Esophagus squamous epithelium (tissue), 5 donors: ENCODE measurements at regions of chr15 and their contacts with region 1.

Region 1: DNA sequence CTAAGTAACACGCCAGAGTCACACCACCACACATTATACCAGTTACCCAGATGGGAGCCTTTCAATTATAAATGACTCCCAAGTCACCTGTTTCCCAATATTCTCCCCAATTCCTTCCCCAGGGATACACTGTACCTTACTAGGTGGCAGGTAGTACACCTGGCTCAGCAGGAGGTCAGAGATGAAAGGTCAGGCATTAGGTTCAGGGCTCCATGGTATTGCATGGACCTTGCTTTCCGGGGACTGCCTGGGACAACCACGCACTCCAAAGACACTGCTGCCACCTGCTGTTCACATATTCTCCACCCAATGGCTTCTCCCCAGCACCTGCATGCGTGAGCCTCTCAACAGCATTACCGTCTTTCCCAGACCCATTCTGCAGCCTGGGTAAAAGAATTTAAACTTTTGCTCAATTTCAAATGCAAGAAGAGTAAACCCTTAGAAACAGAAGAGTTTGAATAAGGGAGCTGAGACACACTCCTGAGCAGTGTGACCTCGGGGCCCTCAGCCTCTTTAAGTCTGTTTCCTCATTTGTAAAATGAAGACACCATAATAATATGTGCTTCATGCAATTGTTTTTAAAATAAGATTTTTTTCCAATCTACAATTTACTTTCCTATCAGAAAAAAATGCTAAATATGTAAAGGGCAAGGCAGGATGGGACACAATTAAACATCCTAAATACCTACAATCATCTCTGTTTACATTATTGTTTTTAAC is 28.0 kb upstream of the LACTB start:
- DNase-seq: no peak
- H3K4me3 ChIP-seq: no peak overlapping the region
- H3K27ac ChIP-seq: no peak overlapping the region
- H3K4me1 ChIP-seq: no peaks in the 10 kb centered on the region
- H3K27me3 ChIP-seq: no peaks in the 10 kb centered on the region
- CTCF ChIP-seq: peak; percentile 69 to 87 (median 81)
- POLR2A ChIP-seq: no peak

Region 2: DNA sequence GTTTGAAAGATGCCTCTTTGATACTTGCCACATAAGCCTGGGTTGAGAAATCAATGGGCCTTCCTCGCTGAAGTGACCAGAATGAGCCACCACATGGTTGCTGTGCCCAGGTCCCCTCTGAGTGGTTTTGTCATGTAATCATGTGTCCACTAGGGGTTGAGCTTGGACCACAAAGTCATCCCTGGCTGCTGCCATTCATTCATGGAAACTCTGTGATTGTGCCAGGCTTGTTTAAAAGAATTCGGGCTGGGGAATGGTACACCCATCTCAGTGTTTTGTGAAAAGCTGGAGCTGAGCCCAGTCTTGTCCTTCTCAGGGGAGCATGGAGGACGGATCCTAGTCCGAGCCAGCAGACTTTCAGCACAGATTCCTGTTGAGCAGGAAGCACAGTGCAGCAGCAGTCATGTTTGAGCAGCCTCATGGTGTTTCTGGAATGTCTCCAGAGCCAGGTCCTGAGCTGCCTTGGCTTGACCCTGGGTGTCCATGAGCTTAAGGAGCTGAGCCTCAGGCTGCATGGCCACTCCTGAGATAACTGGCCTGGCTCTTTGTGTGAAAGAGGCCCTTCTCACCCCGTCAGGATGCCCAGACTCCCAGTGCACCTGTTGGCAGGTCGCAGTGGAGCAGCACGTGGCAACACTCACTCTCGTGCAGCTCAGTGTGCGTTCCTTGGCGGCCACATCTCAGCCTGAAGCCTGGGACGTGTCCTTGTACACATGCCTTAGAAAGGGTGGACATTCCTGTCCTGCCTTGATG is 311.4 kb before region 1 on chr15:
- intact Hi-C with region 1: loop called (anchors 10 kb)
- DNase-seq: no peak
- H3K4me3 ChIP-seq: no peak overlapping the region
- H3K27ac ChIP-seq: peak overlapping the region in 2 of 4 donors; percentile 32 to 34
- H3K4me1 ChIP-seq: peaks cover 0 to 13% (median 4%) of the 10 kb centered on the region in 3 donors
- H3K27me3 ChIP-seq: no peaks in the 10 kb centered on the region
- CTCF ChIP-seq: peak; percentile 29 to 77 (median 68)
- POLR2A ChIP-seq: no peak

Region 3: DNA sequence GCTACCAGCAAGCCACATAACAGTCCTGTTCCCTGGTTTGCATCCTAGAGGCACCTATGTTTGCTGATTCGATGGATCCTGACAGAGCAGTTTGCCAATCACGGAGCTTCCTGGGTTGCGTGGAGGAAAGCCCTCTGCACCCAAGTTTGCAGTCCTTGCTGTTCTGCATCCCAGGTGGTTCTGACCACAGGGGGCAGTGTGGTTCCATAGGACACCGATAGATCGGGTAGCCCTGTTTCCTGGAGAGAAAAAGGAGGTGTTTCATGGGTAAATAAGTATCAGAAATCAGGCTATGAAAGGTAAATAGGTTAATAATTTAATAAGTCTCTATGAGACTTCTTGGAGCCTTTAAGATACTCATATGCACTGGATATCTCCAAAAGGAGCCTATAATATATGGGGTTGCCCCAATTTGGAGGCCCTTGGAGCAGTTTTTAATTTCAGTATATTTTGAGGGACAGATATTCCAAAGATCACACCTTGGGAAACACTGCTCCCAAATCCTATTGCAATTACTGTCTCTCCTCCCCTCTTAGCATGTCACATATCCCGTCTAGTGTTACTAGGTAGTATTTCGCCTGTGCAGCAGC is 245.7 kb before region 1 on chr15:
- intact Hi-C with region 1: loop called (anchors 10 kb)
- DNase-seq: no peak
- H3K4me3 ChIP-seq: no peak overlapping the region
- H3K27ac ChIP-seq: no peak overlapping the region
- H3K4me1 ChIP-seq: peaks cover 0 to 10% (median 3%) of the 10 kb centered on the region in 3 donors
- H3K27me3 ChIP-seq: peaks cover 0 to 10% (median 0%) of the 10 kb centered on the region in 4 donors
- CTCF ChIP-seq: peak in 5 of 6 experiments; percentile 44 to 68 (median 55)
- POLR2A ChIP-seq: no peak

Region 4: GRCh38 chr15:62886431-62887071 is 207.1 kb before region 1 on chr15:
- intact Hi-C with region 1: no loop called
- DNase-seq: no peak
- H3K4me3 ChIP-seq: no peak overlapping the region
- H3K27ac ChIP-seq: peak overlapping the region in 3 of 4 donors; percentile 49 to 61 (median 54)
- H3K4me1 ChIP-seq: peaks cover 0 to 36% (median 2%) of the 10 kb centered on the region in 3 donors
- H3K27me3 ChIP-seq: peaks cover 0 to 87% (median 0%) of the 10 kb centered on the region in 4 donors
- CTCF ChIP-seq: no peak
- POLR2A ChIP-seq: no peak

Region 5: GRCh38 chr15:63449731-63450130 is 356.1 kb after region 1 on chr15:
- intact Hi-C with region 1: no loop called
- DNase-seq: no peak
- H3K4me3 ChIP-seq: no peak overlapping the region
- H3K27ac ChIP-seq: no peak overlapping the region
- H3K4me1 ChIP-seq: peaks cover 0 to 6% (median 0%) of the 10 kb centered on the region in 3 donors
- H3K27me3 ChIP-seq: no peaks in the 10 kb centered on the region
- CTCF ChIP-seq: no peak
- POLR2A ChIP-seq: no peak